ENCODE measurements at regions of chr19 and their contacts with region 1.

Region 1: DNA sequence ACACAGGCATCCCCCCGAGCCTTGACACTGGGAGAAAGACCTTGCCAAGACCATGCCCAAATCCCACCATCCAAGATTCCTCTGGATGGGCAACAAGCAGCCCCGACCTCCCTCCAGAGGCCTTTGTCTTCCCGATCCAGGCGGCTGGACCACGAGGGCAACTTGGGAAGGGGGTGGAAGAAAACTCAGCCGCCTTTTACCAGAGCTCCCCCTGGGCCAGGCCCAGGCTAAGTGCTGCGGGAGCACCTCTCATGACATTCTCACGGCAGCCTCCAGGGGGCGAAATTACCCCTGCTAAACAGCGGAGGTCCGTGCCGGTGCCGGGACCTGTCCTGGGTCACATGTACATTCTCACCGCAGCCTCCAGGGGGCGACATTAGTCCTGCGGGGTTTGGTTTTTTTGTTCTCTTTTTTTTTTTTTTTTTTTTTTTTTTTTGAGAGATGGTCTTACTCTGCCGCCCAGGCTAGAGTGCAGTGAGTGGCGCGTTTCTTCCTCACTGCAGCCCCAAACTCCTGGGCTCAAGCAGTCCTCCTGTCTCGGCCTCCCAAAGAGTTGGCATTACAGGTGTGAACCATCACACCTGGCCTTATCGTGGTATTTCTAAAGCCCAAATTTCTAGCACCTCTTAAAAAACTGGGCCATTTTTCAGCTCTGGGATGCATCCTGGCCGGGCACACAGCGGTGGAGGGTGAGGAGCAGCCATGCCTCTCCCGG is 2.1 kb upstream of the RSPH6A start:
- DNase-seq: peak; percentile 100
- ATAC-seq: peak; percentile 72
- H3K4me3 Mint-ChIP-seq: peak overlapping the region; percentile 89
- H3K27ac Mint-ChIP-seq: peak overlapping the region; percentile 83; the same call in 1 of the 2 replicates
- H3K4me1 Mint-ChIP-seq: peaks cover 37% of the 10 kb centered on the region
- H3K27me3 Mint-ChIP-seq: no peaks in the 10 kb centered on the region; the same call in none of the 2 replicates
- CTCF ChIP-seq: peak; percentile 98

Region 2: GRCh38 chr19:45478454-45479238 is 338.5 kb before region 1 on chr19:
- CTCF ChIA-PET with region 1: no interaction called
- POLR2A ChIA-PET with region 1: no interaction called
- DNase-seq: peak; percentile 90
- ATAC-seq: peak; percentile 94
- H3K4me3 Mint-ChIP-seq: peak overlapping the region; percentile 69
- H3K27ac Mint-ChIP-seq: peak overlapping the region; percentile 99
- H3K4me1 Mint-ChIP-seq: peaks cover 23% of the 10 kb centered on the region
- H3K27me3 Mint-ChIP-seq: peaks cover 47% of the 10 kb centered on the region
- CTCF ChIP-seq: peak; percentile 90

Region 3: DNA sequence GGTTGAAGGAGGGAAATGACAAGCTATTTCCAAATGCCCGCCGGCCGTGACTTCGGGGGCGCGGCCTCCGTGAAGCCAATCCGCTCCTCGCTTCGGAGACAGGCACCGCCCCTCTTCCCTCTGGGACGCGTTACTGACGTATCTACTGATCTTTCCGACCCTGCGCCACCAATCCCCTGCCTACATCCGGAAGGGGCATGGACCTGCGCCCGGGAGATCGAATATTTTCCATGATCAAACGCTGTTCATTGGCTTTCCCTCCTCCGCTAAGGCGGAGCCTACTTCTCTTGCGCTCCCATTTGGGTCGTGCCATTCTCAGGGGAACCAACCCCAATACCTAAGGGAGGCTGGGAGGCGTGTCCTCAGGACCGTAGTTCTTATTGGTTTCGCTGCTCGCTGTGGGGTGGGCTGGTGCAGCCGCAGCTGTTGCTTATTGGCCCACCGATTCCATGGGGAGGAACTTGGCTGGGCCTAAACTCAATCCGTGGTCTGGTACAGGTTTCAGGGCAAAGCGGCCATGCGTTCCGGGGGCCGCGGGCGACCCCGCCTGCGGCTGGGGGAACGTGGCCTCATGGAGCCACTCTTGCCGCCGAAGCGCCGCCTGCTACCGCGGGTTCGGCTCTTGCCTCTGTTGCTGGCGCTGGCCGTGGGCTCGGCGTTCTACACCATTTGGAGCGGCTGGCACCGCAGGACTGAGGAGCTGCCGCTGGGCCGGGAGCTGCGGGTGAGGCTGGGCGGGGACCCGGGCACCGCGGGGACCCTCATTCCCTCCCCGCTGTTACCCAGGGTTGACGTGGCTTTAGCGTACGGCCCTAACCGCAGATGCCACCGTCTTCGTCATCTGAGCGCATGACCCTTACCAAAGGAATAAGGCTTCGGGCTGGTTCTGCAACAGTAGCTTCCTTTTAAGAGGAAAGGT is 124.7 kb before region 1 on chr19 and contains the start of gene QPCTL:
- CTCF ChIA-PET with region 1: interaction called, 15 read pairs
- POLR2A ChIA-PET with region 1: interaction called, 6 read pairs
- DNase-seq: peak; percentile 97
- ATAC-seq: peak; percentile 95
- H3K4me3 Mint-ChIP-seq: peak within 1 kb of the TSS; percentile 96
- H3K27ac Mint-ChIP-seq: peak within 1 kb of the TSS; percentile 100
- H3K4me1 Mint-ChIP-seq: peaks cover 6% of the 10 kb centered on the region; the same call in 1 of the 2 replicates
- H3K27me3 Mint-ChIP-seq: peaks cover 3% of the 10 kb centered on the region; the same call in 1 of the 2 replicates
- CTCF ChIP-seq: no peak
- total RNA-seq, gene QPCTL: 23.8 to 33.3 TPM (median 27.5 TPM) in 3 replicates

Region 4: DNA sequence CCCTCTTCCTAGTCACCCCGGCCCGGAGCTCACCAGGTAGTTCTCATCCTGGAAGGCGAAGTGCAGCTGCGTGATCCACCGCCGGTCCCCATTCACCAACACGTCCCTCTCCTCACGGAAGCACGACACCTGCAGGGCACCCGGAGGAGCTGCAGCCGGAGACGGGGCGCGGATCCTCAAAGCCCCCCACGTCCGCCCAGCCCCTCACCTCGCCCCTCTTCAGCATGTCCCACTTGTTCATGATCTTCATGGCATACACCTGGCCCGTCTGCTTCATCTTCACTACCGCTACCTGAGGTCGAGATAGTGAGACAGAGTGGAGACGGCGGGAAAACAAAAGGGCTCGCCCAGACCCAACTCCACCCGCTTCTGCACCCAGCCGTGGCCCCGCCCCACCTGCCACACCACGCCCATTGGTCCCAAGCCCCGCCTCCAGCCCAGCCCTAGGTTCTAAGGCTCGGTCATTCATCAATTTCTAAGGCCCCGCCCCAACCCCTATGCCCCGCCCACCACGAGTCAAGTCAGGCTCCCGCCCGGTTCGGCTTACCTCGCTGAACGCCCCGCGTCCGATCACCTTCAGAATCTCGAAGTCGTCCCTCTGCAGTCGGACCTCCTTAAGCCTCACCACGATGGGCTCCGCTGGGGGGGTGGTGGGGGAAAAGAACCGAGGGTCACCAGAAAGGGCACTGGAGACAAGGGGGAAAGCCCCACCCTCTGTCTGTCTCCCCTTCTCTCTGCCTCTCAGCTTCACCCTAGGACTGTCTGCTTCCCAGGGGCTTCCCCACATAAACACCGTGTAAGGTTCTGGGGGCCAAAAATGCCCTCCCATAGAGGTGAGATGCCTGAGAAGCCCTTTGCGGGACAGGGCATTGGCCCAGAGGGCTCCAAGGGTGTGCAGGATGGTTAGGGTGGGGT is 37.7 kb before region 1 on chr19:
- CTCF ChIA-PET with region 1: interaction called, 30 read pairs
- POLR2A ChIA-PET with region 1: no interaction called
- DNase-seq: peak; percentile 98
- ATAC-seq: peak; percentile 85
- H3K4me3 Mint-ChIP-seq: peak overlapping the region; percentile 78
- H3K27ac Mint-ChIP-seq: peak overlapping the region; percentile 47; the same call in 1 of the 2 replicates
- H3K4me1 Mint-ChIP-seq: peaks cover 33% of the 10 kb centered on the region
- H3K27me3 Mint-ChIP-seq: peaks cover 35% of the 10 kb centered on the region
- CTCF ChIP-seq: peak; percentile 72; the same call in 1 of the 2 replicates

Region 5: GRCh38 chr19:45834970-45835369 is 17.8 kb after region 1 on chr19:
- CTCF ChIA-PET with region 1: interaction called, 10 read pairs
- POLR2A ChIA-PET with region 1: no interaction called
- DNase-seq: no peak
- ATAC-seq: no peak
- H3K4me3 Mint-ChIP-seq: no peak overlapping the region
- H3K27ac Mint-ChIP-seq: no peak overlapping the region
- H3K4me1 Mint-ChIP-seq: no peaks in the 10 kb centered on the region
- H3K27me3 Mint-ChIP-seq: no peaks in the 10 kb centered on the region
- CTCF ChIP-seq: no peak

Region 6: GRCh38 chr19:45886427-45887199 is 69.4 kb after region 1 on chr19:
- CTCF ChIA-PET with region 1: interaction called, 51 read pairs
- POLR2A ChIA-PET with region 1: interaction called, 6 read pairs
- DNase-seq: peak; percentile 92
- ATAC-seq: peak; percentile 49
- H3K4me3 Mint-ChIP-seq: peak overlapping the region; percentile 94
- H3K27ac Mint-ChIP-seq: peak overlapping the region; percentile 96
- H3K4me1 Mint-ChIP-seq: peaks cover 20% of the 10 kb centered on the region
- H3K27me3 Mint-ChIP-seq: no peaks in the 10 kb centered on the region
- CTCF ChIP-seq: no peak

Region 7: GRCh38 chr19:45960595-45961235 is 143.5 kb after region 1 on chr19:
- CTCF ChIA-PET with region 1: interaction called, 12 read pairs
- POLR2A ChIA-PET with region 1: no interaction called
- DNase-seq: peak; percentile 82
- ATAC-seq: peak; percentile 97
- H3K4me3 Mint-ChIP-seq: peak overlapping the region; percentile 14
- H3K27ac Mint-ChIP-seq: 0 out of 2 replicates have a peak overlapping the region, but pooled peaks have one; percentile 6
- H3K4me1 Mint-ChIP-seq: peaks cover 13% of the 10 kb centered on the region
- H3K27me3 Mint-ChIP-seq: peaks cover 78% of the 10 kb centered on the region
- CTCF ChIP-seq: no peak

Region 8: GRCh38 chr19:46076951-46077816 is 260.0 kb after region 1 on chr19:
- CTCF ChIA-PET with region 1: interaction called, 19 read pairs
- POLR2A ChIA-PET with region 1: no interaction called
- DNase-seq: peak; percentile 83
- ATAC-seq: peak; percentile 91
- H3K4me3 Mint-ChIP-seq: peak overlapping the region; percentile 84
- H3K27ac Mint-ChIP-seq: no peak overlapping the region
- H3K4me1 Mint-ChIP-seq: peaks cover 2% of the 10 kb centered on the region
- H3K27me3 Mint-ChIP-seq: peaks cover 83% of the 10 kb centered on the region
- CTCF ChIP-seq: peak; percentile 75

Region 9: GRCh38 chr19:46124638-46125115 is 307.5 kb after region 1 on chr19 and contains the start of gene IGFL3:
- CTCF ChIA-PET with region 1: no interaction called
- POLR2A ChIA-PET with region 1: no interaction called
- DNase-seq: no peak
- ATAC-seq: no peak
- H3K4me3 Mint-ChIP-seq: no peak within 1 kb of the TSS
- H3K27ac Mint-ChIP-seq: no peak within 1 kb of the TSS
- H3K4me1 Mint-ChIP-seq: peaks cover 7% of the 10 kb centered on the region
- H3K27me3 Mint-ChIP-seq: peaks cover 11% of the 10 kb centered on the region; the same call in 1 of the 2 replicates
- CTCF ChIP-seq: no peak
- total RNA-seq, gene IGFL3: not detected in 3 replicates

Measured in WTC11 (cell line).